GM10248 (cell line): ENCODE measurements at regions of chr16 and their contacts with region 1.

Region 1: DNA sequence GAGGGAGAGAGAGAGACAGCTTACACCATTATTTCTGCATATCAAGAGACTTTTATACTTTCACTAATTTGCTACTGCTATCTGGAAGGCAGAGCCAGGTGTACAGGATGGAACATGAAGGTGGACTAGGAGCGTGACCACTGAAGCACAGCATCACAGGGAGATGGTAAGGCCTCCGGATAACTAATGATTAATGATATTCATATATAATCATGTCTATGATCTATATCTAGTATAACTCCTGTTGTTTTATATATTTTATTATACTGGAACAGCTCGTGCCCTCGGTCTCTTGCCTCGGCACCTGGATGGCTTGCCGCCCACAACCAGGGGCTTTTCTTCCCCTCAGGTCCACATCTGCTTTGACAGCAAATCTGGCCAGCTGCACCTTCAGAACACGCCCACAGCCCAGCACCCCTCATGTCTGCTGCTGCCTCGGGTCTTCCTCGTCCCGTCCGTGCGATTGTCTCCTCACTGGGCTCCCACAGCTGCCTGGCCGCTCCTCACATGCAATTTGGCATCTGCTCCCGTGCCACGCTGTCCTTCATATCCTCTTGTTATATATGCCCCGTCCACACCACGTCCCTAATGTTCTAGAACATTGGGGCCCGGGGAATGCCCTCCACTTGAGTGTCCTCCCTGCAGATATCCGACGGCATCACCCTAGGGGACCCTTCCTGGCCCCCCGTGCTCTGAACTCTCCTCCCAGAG is 10.2 kb upstream of the DEF8 start:
- DNase-seq: no peak
- CTCF ChIP-seq: no peak

Region 2: GRCh38 chr16:89949121-89949742 is 10.9 kb after region 1 on chr16:
- CTCF ChIA-PET with region 1: interaction called, 15 read pairs
- POLR2A ChIA-PET with region 1: no interaction called
- DNase-seq: no peak
- CTCF ChIP-seq: no peak

Region 3: GRCh38 chr16:90061437-90061836 is 123.1 kb after region 1 on chr16:
- CTCF ChIA-PET with region 1: no interaction called
- POLR2A ChIA-PET with region 1: no interaction called
- DNase-seq: no peak
- CTCF ChIP-seq: no peak